Activated T-helper 1 cell treated with anti-CD3 and anti-CD28 coated beads, Interleukin-12 subunit alpha, Interleukin-12 subunit beta, Interleukin-2, Interleukin-4 antibody, amounts not matched to agents 30 ng/mL and 10 ng/mL and 1 ng/mL, durations not matched to agents 14 hours and 24 hours and 36 hours (primary cell): ENCODE measurements at regions of chr12 and their contacts with region 1.

Region 1: DNA sequence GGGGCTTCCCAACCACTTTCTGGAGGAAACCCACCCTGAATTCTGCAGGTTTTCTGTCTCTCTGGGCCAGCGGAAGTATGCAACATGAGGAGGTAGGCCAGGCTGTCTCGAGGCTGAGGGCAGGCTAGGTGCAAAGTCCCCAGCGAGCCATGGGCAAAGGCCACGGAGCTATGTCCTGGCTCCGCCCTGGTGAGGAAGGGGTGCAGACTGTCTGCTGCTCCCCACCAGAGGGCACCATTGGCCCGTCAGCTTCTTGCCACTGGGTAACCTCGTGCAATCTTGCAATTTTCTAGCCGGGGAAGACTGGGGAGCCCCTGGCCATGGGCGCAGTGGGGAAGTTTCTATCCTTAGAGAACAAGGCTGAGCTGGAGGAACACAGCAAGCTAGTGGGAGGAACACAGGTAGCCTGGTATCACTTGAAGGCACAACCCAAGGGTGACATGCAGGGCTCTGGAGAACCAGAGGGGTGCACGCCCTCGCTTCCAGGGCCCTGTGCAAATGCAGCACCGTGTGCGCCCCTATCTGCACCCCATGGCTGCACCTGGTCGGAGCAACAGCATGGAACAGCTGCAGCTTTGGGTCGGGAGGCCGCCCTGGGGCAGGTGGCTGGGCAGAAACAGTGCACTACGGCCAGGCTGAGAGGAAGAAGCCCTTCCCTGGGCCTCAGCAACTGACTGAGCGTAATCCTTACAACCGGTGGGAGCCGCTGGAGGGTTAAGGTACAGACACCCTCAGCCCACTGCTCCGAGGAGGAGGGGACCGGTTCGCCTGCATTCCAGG is 27.6 kb upstream of the RPLP0 start:
- DNase-seq: peak; percentile 80
- H3K4me3 Mint-ChIP-seq: peak overlapping the region; percentile 43
- H3K27ac Mint-ChIP-seq: peak overlapping the region; percentile 97
- H3K4me1 Mint-ChIP-seq: peaks cover 84% of the 10 kb centered on the region
- H3K27me3 Mint-ChIP-seq: no peaks in the 10 kb centered on the region

Region 2: GRCh38 chr12:120249875-120250795 is 21.7 kb after region 1 on chr12:
- intact Hi-C with region 1: loop called (anchors 1 kb)
- DNase-seq: peak; percentile 42
- H3K4me3 Mint-ChIP-seq: peak overlapping the region; percentile 73
- H3K27ac Mint-ChIP-seq: peak overlapping the region; percentile 53
- H3K4me1 Mint-ChIP-seq: peaks cover 77% of the 10 kb centered on the region
- H3K27me3 Mint-ChIP-seq: no peaks in the 10 kb centered on the region

Region 3: DNA sequence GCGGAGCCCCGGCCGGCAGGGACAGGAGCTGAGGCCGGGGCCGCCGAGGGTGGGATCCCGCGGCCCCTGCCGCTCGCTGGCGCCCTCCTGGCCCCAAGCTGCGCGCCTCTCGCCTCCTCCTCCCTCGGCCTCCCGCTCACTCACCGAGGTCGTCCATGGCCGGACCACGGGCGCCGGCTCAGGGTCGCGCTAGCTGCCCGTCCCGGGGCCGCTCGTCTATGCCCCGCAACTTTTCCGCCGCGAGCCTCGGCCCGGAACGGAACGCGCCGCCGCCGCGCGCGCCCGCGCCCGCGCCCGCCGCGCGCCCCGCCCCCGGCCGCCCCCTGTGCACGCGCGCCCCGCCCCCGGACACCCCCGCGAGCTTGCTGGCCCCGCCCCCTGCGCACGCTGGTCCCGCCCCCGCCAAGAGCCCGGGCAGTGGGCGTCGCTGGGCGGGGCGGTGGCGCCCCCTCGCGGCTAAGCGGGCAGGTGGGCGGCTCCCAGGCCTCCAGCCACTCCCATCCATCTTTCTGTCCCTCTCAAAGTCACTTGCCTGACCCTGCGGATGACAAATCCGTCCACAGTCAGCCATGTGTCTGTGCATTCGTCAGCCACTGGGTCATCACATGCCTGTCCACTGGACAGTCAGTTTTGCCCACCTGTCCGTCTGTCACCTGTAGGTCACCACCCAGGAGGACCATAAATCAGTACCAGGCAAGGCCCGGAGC is 37.1 kb after region 1 on chr12 and contains the start of gene PXN:
- intact Hi-C with region 1: loop called (anchors 1 kb)
- DNase-seq: peak; percentile 87
- H3K4me3 Mint-ChIP-seq: peak within 1 kb of the TSS; percentile 97
- H3K27ac Mint-ChIP-seq: peak within 1 kb of the TSS; percentile 97
- H3K4me1 Mint-ChIP-seq: peaks cover 51% of the 10 kb centered on the region
- H3K27me3 Mint-ChIP-seq: no peaks in the 10 kb centered on the region
- total RNA-seq, gene PXN: 53.0 and 57.7 TPM in 2 replicates

Region 4: DNA sequence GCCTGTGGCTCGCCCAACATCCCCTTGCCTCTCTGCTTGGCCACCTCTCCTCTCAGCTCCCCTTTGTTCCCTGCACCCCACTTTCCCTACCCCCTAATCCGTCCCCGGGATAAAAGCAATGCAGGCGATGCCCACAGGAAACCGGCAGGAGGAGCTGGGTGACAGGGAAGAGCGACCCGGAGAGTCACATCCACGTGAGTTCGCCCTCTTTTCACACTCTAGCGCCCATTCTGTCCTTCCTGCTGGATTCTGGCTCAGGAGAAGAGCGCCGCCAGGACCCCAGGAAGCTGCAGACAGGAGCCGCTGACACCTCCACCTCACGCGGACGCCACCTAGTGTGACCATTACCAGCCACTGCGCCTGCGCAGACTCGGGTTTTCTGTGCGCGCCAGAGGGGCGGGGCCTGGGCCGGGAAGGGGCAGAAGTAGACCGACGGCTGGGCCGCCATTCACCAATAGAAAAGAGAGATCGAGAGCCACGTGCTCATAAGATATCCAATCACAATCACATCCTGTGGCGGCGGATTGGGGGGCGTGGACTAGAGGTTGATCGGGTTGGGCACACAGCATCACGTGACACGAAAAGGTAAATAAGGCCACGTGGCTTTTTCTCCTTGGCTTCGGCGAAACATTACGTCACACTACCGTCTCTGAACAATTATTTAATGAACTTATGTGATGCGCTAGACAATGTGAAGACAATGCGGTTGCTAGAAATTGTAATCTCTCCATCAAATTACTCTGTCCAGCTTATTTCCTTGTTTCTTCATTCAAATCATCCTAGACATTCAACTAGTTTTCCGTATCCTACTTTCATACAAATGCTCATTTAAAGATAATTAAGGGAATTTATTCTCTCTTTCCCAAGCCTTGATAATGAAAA is 89.0 kb after region 1 on chr12:
- intact Hi-C with region 1: loop called (anchors 1 kb)
- DNase-seq: peak; percentile 100
- H3K4me3 Mint-ChIP-seq: peak overlapping the region; percentile 89
- H3K27ac Mint-ChIP-seq: peak overlapping the region; percentile 92
- H3K4me1 Mint-ChIP-seq: peaks cover 16% of the 10 kb centered on the region
- H3K27me3 Mint-ChIP-seq: peaks cover 6% of the 10 kb centered on the region

Region 5: GRCh38 chr12:120469450-120470149 is 241.1 kb after region 1 on chr12 and contains the start of gene SRSF9:
- intact Hi-C with region 1: loop called (anchors 10 kb)
- DNase-seq: peak; percentile 97
- H3K4me3 Mint-ChIP-seq: peak within 1 kb of the TSS; percentile 95
- H3K27ac Mint-ChIP-seq: peak within 1 kb of the TSS; percentile 87
- H3K4me1 Mint-ChIP-seq: peaks cover 52% of the 10 kb centered on the region
- H3K27me3 Mint-ChIP-seq: peaks cover 2% of the 10 kb centered on the region
- total RNA-seq, gene SRSF9: 233 and 239 TPM in 2 replicates